B cell (primary cell): ENCODE measurements at regions of chr17 and their contacts with region 1.

Region 1: GRCh38 chr17:16363749-16364536 is 10.7 kb upstream of the CENPV start:
- DNase-seq: peak; percentile 81
- ATAC-seq: peak; percentile 99
- H3K4me3 ChIP-seq: no peak overlapping the region
- H3K4me3 Mint-ChIP-seq: no peak overlapping the region
- H3K27ac ChIP-seq: no peak overlapping the region
- H3K27ac Mint-ChIP-seq: no peak overlapping the region
- H3K4me1 ChIP-seq: peaks cover 0 to 4% of the 10 kb centered on the region in 2 donors
- H3K4me1 Mint-ChIP-seq: no peaks in the 10 kb centered on the region
- H3K27me3 ChIP-seq: no peaks in the 10 kb centered on the region
- H3K27me3 Mint-ChIP-seq: no peaks in the 10 kb centered on the region
- CTCF ChIP-seq: peak; percentile 97

Region 2: GRCh38 chr17:16285957-16286640 is 77.8 kb before region 1 on chr17:
- CTCF ChIA-PET with region 1: interaction called, 15 read pairs
- POLR2A ChIA-PET with region 1: no interaction called
- intact Hi-C with region 1: no loop called
- DNase-seq: peak; percentile 74
- ATAC-seq: peak; percentile 66
- H3K4me3 ChIP-seq: peak overlapping the region in 4 of 5 experiments; percentile 5 to 61 (median 44)
- H3K4me3 Mint-ChIP-seq: peak overlapping the region; percentile 86
- H3K27ac ChIP-seq: peak overlapping the region; percentile 91 to 94
- H3K27ac Mint-ChIP-seq: peak overlapping the region; percentile 98
- H3K4me1 ChIP-seq: peaks cover 59 to 63% of the 10 kb centered on the region in 2 donors
- H3K4me1 Mint-ChIP-seq: peaks cover 56% of the 10 kb centered on the region
- H3K27me3 ChIP-seq: no peaks in the 10 kb centered on the region
- H3K27me3 Mint-ChIP-seq: no peaks in the 10 kb centered on the region
- CTCF ChIP-seq: peak; percentile 47

Region 3: GRCh38 chr17:16353317-16354174 is 10.4 kb before region 1 on chr17 and contains the start of gene CENPV:
- CTCF ChIA-PET with region 1: interaction called, 25 read pairs
- POLR2A ChIA-PET with region 1: interaction called, 3 read pairs
- intact Hi-C with region 1: no loop called
- DNase-seq: peak; percentile 86
- ATAC-seq: peak; percentile 87
- H3K4me3 ChIP-seq: peak within 1 kb of the TSS; percentile 51 to 78 (median 70)
- H3K4me3 Mint-ChIP-seq: peak within 1 kb of the TSS; percentile 94
- H3K27ac ChIP-seq: peak within 1 kb of the TSS in 1 of 2 donors; percentile 56
- H3K27ac Mint-ChIP-seq: peak within 1 kb of the TSS; percentile 80
- H3K4me1 ChIP-seq: peaks cover 8 to 16% of the 10 kb centered on the region in 2 donors
- H3K4me1 Mint-ChIP-seq: peaks cover 15% of the 10 kb centered on the region
- H3K27me3 ChIP-seq: no peaks in the 10 kb centered on the region
- H3K27me3 Mint-ChIP-seq: no peaks in the 10 kb centered on the region
- CTCF ChIP-seq: no peak
- total RNA-seq, gene CENPV: 15.8 and 17.7 TPM in 2 replicates

Region 4: DNA sequence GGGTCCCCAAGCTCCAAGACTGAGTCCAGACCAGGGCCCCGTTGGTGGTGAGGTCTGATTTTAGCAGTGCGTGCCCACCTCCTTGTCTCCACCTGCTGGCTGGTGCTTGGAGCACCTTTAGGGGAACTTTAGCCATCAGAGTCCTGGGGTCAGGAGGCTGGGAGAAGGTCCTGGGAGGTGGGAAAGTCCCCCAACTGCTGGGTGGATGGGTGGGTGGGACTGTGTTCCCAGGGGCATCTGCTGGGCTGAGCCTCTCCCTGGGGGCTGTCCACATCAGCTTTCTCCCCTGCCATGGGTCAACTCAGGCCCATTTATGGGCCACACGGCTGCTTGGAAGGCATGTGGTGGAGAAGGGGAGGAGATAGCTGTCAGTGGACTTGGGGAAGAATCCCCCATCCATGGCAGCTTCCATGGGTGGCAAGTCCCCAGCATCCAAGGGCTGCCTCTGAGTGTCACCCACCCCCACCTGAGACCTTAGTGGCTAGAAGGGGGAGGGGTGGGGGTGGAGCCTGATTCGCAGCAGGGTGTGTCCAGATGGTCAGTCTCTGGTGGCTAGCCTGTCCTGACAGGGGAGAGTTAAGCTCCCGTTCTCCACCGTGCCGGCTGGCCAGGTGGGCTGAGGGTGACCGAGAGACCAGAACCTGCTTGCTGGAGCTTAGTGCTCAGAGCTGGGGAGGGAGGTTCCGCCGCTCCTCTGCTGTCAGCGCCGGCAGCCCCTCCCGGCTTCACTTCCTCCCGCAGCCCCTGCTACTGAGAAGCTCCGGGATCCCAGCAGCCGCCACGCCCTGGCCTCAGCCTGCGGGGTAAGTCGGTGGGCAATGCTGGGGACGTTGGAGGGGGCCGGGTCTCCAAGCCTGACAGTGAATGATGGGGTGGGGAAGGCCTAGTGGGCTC is 51.3 kb after region 1 on chr17 and contains the start of gene TRPV2:
- CTCF ChIA-PET with region 1: interaction called, 91 read pairs
- POLR2A ChIA-PET with region 1: interaction called, 3 read pairs
- intact Hi-C with region 1: loop called (anchors 1 kb)
- DNase-seq: peak; percentile 73
- ATAC-seq: peak; percentile 47
- H3K4me3 ChIP-seq: peak within 1 kb of the TSS; percentile 53 to 86 (median 67)
- H3K4me3 Mint-ChIP-seq: peak within 1 kb of the TSS; percentile 98
- H3K27ac ChIP-seq: peak within 1 kb of the TSS; percentile 94 to 98
- H3K27ac Mint-ChIP-seq: peak within 1 kb of the TSS; percentile 95
- H3K4me1 ChIP-seq: peaks cover 27 to 48% of the 10 kb centered on the region in 2 donors
- H3K4me1 Mint-ChIP-seq: peaks cover 42% of the 10 kb centered on the region
- H3K27me3 ChIP-seq: no peaks in the 10 kb centered on the region
- H3K27me3 Mint-ChIP-seq: no peaks in the 10 kb centered on the region
- CTCF ChIP-seq: peak; percentile 64
- total RNA-seq, gene TRPV2: 58.6 TPM in 2 replicates

Region 5: GRCh38 chr17:16521070-16521727 is 157.3 kb after region 1 on chr17:
- CTCF ChIA-PET with region 1: interaction called, 158 read pairs
- POLR2A ChIA-PET with region 1: interaction called, 3 read pairs
- intact Hi-C with region 1: loop called (anchors 1 kb)
- DNase-seq: peak; percentile 80
- ATAC-seq: peak; percentile 88
- H3K4me3 ChIP-seq: no peak overlapping the region
- H3K4me3 Mint-ChIP-seq: no peak overlapping the region
- H3K27ac ChIP-seq: no peak overlapping the region
- H3K27ac Mint-ChIP-seq: no peak overlapping the region
- H3K4me1 ChIP-seq: peaks cover 0 to 4% of the 10 kb centered on the region in 2 donors
- H3K4me1 Mint-ChIP-seq: peaks cover 7% of the 10 kb centered on the region
- H3K27me3 ChIP-seq: peaks cover 0 to 18% (median 7%) of the 10 kb centered on the region in 4 experiments
- H3K27me3 Mint-ChIP-seq: peaks cover 51% of the 10 kb centered on the region
- CTCF ChIP-seq: peak; percentile 86